CD4-positive, alpha-beta memory T cell (primary cell): ENCODE measurements at regions of chr7 and their contacts with region 1.

Region 1: DNA sequence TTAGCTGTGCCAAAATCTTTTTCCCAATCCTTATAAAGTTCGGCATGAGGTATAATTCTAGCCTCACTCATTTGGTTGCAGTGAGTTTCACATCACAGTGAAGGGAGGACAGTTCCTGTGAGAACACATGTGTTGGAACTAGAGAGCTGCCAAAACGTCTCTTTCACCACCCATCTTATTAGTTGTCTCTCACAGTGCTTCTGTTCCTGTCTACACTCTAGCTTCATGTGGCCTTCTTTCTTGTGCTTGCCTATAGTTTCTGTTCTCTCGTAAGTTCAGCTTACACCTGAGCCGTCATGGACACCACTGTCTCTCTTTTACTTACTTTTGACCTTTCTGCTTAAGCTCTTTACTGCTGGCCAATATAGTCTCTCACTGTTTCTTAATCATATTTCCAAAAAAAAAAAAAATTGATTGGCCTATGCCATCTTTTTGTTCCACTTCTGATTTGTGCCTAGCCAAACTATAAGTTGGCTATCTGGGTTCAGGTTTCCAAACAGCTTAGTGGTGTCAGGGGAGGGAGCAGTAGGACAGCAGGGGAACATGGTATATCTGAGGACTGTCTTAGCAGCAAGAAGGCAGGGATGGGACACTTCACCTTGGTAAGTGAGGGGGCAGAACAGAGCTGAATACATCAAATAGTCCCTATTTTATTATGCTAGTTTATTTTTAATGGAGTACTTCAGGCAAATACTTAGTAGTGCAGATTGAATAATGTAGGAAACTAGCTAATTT is 38.0 kb downstream of the ZNRF2 start:
- DNase-seq: peak in 4 of 5 donors; percentile 29 to 45 (median 37)
- H3K4me3 ChIP-seq: peak overlapping the region; percentile 32 to 39
- H3K4me3 Mint-ChIP-seq: peak overlapping the region; percentile 80 to 92 (median 89)
- H3K27ac ChIP-seq: peak overlapping the region; percentile 76
- H3K27ac Mint-ChIP-seq: peak overlapping the region; percentile 85 to 98 (median 96)
- H3K4me1 ChIP-seq: peaks cover 63% of the 10 kb centered on the region
- H3K4me1 Mint-ChIP-seq: peaks cover 53 to 82% (median 65%) of the 10 kb centered on the region in 4 donors
- H3K27me3 ChIP-seq: no peaks in the 10 kb centered on the region
- H3K27me3 Mint-ChIP-seq: no peaks in the 10 kb centered on the region

Region 2: GRCh38 chr7:30201161-30201666 is 121.2 kb before region 1 on chr7:
- CTCF ChIA-PET with region 1: no interaction called
- POLR2A ChIA-PET with region 1: no interaction called
- intact Hi-C with region 1: no loop called
- DNase-seq: no peak
- H3K4me3 ChIP-seq: no peak overlapping the region
- H3K4me3 Mint-ChIP-seq: no peak overlapping the region
- H3K27ac ChIP-seq: no peak overlapping the region
- H3K27ac Mint-ChIP-seq: no peak overlapping the region
- H3K4me1 ChIP-seq: no peaks in the 10 kb centered on the region
- H3K4me1 Mint-ChIP-seq: no peaks in the 10 kb centered on the region
- H3K27me3 ChIP-seq: no peaks in the 10 kb centered on the region
- H3K27me3 Mint-ChIP-seq: no peaks in the 10 kb centered on the region

Region 3: GRCh38 chr7:30276203-30276900 is 46.1 kb before region 1 on chr7:
- CTCF ChIA-PET with region 1: interaction called, 5 read pairs
- POLR2A ChIA-PET with region 1: interaction called, 10 read pairs
- intact Hi-C with region 1: no loop called
- DNase-seq: peak; percentile 41 to 53 (median 44)
- H3K4me3 ChIP-seq: no peak overlapping the region
- H3K4me3 Mint-ChIP-seq: peak overlapping the region in 1 of 8 donors; percentile 20
- H3K27ac ChIP-seq: no peak overlapping the region
- H3K27ac Mint-ChIP-seq: no peak overlapping the region
- H3K4me1 ChIP-seq: no peaks in the 10 kb centered on the region
- H3K4me1 Mint-ChIP-seq: peaks cover 3 to 8% (median 4%) of the 10 kb centered on the region in 4 donors
- H3K27me3 ChIP-seq: no peaks in the 10 kb centered on the region
- H3K27me3 Mint-ChIP-seq: peaks cover 0 to 1% of the 10 kb centered on the region in 2 donors

Region 4: GRCh38 chr7:30308389-30308788 is 14.0 kb before region 1 on chr7:
- CTCF ChIA-PET with region 1: interaction called, 11 read pairs
- POLR2A ChIA-PET with region 1: interaction called, 19 read pairs
- intact Hi-C with region 1: loop called (anchors 2 kb)
- DNase-seq: no peak
- H3K4me3 ChIP-seq: no peak overlapping the region
- H3K4me3 Mint-ChIP-seq: peak overlapping the region in 1 of 8 donors; percentile 33
- H3K27ac ChIP-seq: no peak overlapping the region
- H3K27ac Mint-ChIP-seq: no peak overlapping the region
- H3K4me1 ChIP-seq: peaks cover 77% of the 10 kb centered on the region
- H3K4me1 Mint-ChIP-seq: peaks cover 48 to 84% (median 65%) of the 10 kb centered on the region in 4 donors
- H3K27me3 ChIP-seq: no peaks in the 10 kb centered on the region
- H3K27me3 Mint-ChIP-seq: no peaks in the 10 kb centered on the region

Region 5: DNA sequence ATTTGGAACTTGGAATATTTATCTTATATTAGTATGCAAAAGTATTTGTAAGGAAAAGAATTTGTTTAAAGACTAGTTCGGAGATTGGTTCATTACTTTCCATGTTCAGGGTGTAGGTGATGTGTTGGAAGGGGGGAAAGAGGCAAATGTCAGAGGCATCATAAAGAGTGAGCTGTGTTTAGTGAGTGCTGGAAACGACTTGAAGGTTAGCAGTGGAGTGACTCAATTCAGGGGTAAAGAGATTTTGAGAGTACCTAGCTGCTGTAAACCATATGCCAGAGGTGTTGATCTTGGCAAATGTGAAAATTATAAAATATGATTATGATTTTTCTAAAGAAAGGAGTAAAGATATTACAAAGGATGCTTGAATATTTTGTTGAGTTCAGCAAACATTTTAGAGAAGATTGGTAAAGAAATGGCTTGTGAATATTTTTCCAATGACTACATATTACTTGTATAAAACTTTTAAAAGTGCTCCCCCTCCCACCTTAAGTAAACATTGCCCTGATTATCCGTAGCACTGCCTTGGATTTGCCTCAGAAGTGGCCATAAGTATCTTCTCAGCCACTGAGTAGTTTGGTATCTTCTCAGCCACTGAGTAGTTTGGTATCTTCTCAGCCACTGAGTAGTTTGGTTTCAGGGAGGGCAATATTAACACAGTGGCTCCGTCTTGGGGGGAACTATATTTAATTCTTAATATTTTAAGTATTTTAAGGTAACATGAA is 13.5 kb after region 1 on chr7:
- CTCF ChIA-PET with region 1: interaction called, 8 read pairs
- POLR2A ChIA-PET with region 1: interaction called, 34 read pairs
- intact Hi-C with region 1: no loop called
- DNase-seq: no peak
- H3K4me3 ChIP-seq: no peak overlapping the region
- H3K4me3 Mint-ChIP-seq: peak overlapping the region in 1 of 8 donors; percentile 1
- H3K27ac ChIP-seq: no peak overlapping the region
- H3K27ac Mint-ChIP-seq: peak overlapping the region in 1 of 7 donors; percentile 7
- H3K4me1 ChIP-seq: peaks cover 38% of the 10 kb centered on the region
- H3K4me1 Mint-ChIP-seq: peaks cover 43 to 78% (median 59%) of the 10 kb centered on the region in 4 donors
- H3K27me3 ChIP-seq: no peaks in the 10 kb centered on the region
- H3K27me3 Mint-ChIP-seq: no peaks in the 10 kb centered on the region

Region 6: DNA sequence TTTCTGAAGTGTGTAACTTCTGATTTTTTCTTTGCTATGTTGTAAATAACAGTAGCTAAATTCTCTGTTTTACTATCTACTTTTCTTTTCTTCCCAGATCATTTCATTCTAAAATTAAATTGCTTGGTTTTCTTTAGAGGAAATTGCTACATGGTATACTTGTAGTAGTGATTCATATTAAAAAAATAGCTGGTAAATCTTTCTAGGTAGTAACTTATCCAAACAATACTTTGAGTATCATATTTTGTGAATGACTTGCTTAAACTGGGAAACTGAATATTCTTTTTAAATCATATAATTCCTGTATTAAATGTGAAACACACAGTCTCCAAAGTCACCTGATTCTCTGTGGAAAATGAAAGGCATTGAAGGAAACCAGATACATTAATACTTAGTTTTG is 47.4 kb after region 1 on chr7:
- CTCF ChIA-PET with region 1: no interaction called
- POLR2A ChIA-PET with region 1: no interaction called
- intact Hi-C with region 1: no loop called
- DNase-seq: no peak
- H3K4me3 ChIP-seq: no peak overlapping the region
- H3K4me3 Mint-ChIP-seq: no peak overlapping the region
- H3K27ac ChIP-seq: no peak overlapping the region
- H3K27ac Mint-ChIP-seq: peak overlapping the region in 1 of 7 donors; percentile 13
- H3K4me1 ChIP-seq: no peaks in the 10 kb centered on the region
- H3K4me1 Mint-ChIP-seq: peaks cover 2 to 4% (median 3%) of the 10 kb centered on the region in 4 donors
- H3K27me3 ChIP-seq: no peaks in the 10 kb centered on the region
- H3K27me3 Mint-ChIP-seq: no peaks in the 10 kb centered on the region